ENCODE measurements at regions of chr10 and their contacts with region 1.

Region 1: DNA sequence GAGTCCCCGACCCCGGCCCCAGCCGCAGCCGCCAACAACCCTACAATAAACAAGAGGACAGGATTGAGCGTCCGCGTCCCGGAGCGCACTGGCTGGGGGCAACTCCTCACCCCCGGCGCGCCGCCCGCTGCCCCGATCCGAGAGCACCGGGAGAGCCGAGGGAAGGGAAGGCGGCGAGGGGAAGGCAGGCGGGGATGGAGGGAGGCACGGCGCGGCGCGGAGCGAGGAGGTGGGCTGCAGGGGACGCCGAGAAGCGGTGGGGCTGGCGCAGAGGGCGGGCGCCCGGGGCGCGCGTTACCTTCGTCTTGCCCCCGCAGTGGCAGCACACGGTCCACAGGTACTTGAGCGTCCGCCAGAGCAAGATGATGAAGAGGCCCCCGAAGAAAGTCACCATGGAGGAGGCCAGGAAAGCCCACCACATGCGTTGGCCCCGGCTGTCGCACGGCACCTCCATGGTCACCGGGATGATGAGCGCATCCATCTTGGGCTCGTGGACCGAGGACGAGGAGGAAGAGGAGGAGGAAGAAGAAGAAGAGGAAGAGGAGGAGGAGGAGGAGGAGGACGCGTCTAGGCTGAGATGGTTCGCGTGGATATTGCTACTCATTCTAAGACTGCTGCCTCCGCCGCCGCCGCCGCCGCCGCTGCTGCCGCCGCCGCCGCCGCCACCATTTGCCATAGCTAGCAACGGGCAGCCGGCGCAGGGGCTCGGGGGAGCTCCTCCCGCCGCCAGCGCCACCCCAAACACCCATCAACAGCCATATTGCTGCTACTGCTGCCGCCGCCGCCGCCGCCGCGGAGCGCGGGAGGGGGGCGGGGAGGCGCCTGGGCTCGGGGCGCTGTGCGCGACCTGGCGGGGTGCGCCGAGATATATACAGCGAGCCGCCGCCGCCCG is at the start of gene KCNMA1:
- DNase-seq: no peak
- H3K4me3 ChIP-seq: peak within 1 kb of the TSS; percentile 43 to 61
- H3K27ac ChIP-seq: no peak within 1 kb of the TSS
- H3K4me1 ChIP-seq: peaks cover 3% of the 10 kb centered on the region
- H3K27me3 ChIP-seq: no peaks in the 10 kb centered on the region
- CTCF ChIP-seq: no peak
- POLR2A ChIP-seq: no peak
- total RNA-seq, gene KCNMA1: 13.6 to 24.7 TPM

Region 2: DNA sequence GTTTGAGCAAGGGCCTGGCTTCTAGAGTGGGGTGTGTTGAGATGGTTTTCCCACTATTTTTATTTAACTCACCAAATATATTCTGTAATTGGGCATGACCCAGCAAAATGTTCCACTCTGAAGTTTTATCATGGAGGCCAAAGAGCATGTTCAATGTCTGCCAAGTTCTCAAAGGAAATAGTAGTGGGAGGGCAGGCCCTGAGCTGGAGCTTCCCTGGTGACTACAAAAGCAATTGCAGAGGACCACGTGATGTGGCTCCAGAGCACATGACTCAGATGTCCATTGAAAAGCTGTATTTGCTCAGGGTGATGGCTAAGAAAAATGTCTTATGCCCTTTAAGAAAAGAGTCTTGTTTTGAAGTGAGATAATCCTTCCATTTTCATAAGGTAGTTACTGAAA is 1181.0 kb before region 1 on chr10:
- intact Hi-C with region 1: no loop called
- DNase-seq: no peak
- H3K4me3 ChIP-seq: no peak overlapping the region
- H3K27ac ChIP-seq: no peak overlapping the region
- H3K4me1 ChIP-seq: peaks cover 3% of the 10 kb centered on the region
- H3K27me3 ChIP-seq: no peaks in the 10 kb centered on the region
- CTCF ChIP-seq: no peak
- POLR2A ChIP-seq: no peak

Region 3: GRCh38 chr10:77179015-77179695 is 458.1 kb before region 1 on chr10:
- intact Hi-C with region 1: loop called (anchors 5 kb)
- DNase-seq: peak; percentile 26
- H3K4me3 ChIP-seq: no peak overlapping the region
- H3K27ac ChIP-seq: no peak overlapping the region
- H3K4me1 ChIP-seq: no peaks in the 10 kb centered on the region
- H3K27me3 ChIP-seq: no peaks in the 10 kb centered on the region
- CTCF ChIP-seq: no peak
- POLR2A ChIP-seq: no peak

Region 4: GRCh38 chr10:77391605-77392235 is 245.5 kb before region 1 on chr10:
- intact Hi-C with region 1: loop called (anchors 5 kb)
- DNase-seq: peak; percentile 82
- H3K4me3 ChIP-seq: no peak overlapping the region
- H3K27ac ChIP-seq: no peak overlapping the region
- H3K4me1 ChIP-seq: peaks cover 6% of the 10 kb centered on the region
- H3K27me3 ChIP-seq: no peaks in the 10 kb centered on the region
- CTCF ChIP-seq: peak in 2 of 3 experiments; percentile 63 to 68
- POLR2A ChIP-seq: no peak

Region 5: DNA sequence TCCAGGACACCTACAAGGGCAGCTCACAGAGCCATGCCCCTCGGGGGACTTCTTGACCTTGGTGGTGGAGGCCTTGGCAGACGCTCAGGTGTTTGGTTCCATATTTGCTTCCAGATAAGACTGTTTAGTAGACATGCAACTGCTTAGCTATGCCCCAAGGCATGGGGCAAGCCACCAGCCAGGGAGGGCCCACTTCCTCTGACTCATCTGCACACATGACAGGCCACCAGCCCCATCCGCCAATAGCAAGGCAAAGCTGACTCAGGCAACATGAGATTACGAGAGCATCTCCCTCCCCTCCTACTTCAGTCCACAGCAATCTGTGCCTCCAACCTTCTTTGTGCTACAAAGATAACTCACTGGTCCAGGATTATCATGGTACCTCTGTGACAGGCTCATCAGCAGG is 54.5 kb before region 1 on chr10:
- intact Hi-C with region 1: no loop called
- DNase-seq: no peak
- H3K4me3 ChIP-seq: no peak overlapping the region
- H3K27ac ChIP-seq: no peak overlapping the region
- H3K4me1 ChIP-seq: no peaks in the 10 kb centered on the region
- H3K27me3 ChIP-seq: no peaks in the 10 kb centered on the region
- CTCF ChIP-seq: no peak
- POLR2A ChIP-seq: no peak

Region 6: GRCh38 chr10:77846718-77847630 is 209.8 kb after region 1 on chr10:
- intact Hi-C with region 1: no loop called
- DNase-seq: peak; percentile 86
- H3K4me3 ChIP-seq: no peak overlapping the region
- H3K27ac ChIP-seq: peak overlapping the region; percentile 36 to 64
- H3K4me1 ChIP-seq: peaks cover 8% of the 10 kb centered on the region
- H3K27me3 ChIP-seq: no peaks in the 10 kb centered on the region
- CTCF ChIP-seq: peak; percentile 88 to 96 (median 94)
- POLR2A ChIP-seq: no peak

Measured in testis (tissue), 5 donors.